OCI-LY7 (cell line): ENCODE measurements at regions of chrX and their contacts with region 1.

Region 1: DNA sequence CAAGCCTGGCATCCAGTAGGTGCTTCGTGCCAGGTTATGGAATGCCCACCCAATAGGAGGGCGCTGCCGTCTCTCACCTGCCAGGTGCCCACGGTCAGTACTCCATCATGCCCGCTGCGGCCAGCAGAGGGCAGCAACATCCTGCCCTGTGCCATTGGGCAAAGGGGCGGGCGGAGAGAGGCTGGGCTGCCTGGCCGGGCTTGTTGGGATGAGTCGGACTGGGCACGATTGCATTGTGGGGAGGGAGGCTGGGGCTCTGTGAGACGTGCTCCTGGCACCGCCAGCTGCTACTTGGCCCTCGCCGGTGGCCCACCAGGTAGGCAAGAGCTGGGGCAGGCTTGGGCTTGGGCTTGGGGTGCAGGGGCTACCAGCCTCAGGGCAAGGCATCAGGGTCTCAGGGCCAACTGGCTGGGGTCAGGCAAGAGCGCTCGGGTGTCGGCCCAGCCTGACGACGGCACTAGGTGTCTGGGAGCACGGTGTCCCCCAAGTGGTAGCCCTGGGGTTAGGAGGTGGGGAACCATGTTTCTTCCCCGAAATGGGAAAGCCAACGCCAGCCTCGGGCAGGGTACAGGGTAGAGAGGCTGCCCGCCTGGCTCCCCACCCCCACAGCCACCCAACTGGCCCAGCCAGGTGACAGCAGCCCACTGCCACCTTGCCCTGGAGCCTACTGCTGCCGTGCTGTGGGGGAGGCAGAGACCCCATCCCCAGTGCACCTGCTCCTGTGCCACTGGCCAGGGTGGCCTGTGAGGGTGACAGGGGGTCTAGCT is at the start of gene PLXNB3:
- DNase-seq: peak; percentile 64
- H3K4me3 ChIP-seq: no peak within 1 kb of the TSS
- H3K27ac ChIP-seq: no peak within 1 kb of the TSS
- H3K4me1 ChIP-seq: peaks cover 6% of the 10 kb centered on the region
- CTCF ChIP-seq: peak; percentile 78
- total RNA-seq, gene PLXNB3: not detected in 2 replicates

Region 2: GRCh38 chrX:153667956-153668396 is 96.2 kb before region 1 on chrX:
- CTCF ChIA-PET with region 1: no interaction called
- POLR2A ChIA-PET with region 1: no interaction called
- intact Hi-C with region 1: no loop called
- DNase-seq: peak; percentile 56
- H3K4me3 ChIP-seq: no peak overlapping the region
- H3K27ac ChIP-seq: no peak overlapping the region
- H3K4me1 ChIP-seq: no peaks in the 10 kb centered on the region
- CTCF ChIP-seq: peak; percentile 82

Region 3: GRCh38 chrX:153687121-153688039 is 76.8 kb before region 1 on chrX and contains the start of gene SLC6A8:
- CTCF ChIA-PET with region 1: no interaction called
- POLR2A ChIA-PET with region 1: no interaction called
- intact Hi-C with region 1: loop called (anchors 10 kb)
- DNase-seq: peak; percentile 31
- H3K4me3 ChIP-seq: peak within 1 kb of the TSS; percentile 47
- H3K27ac ChIP-seq: no peak within 1 kb of the TSS
- H3K4me1 ChIP-seq: no peaks in the 10 kb centered on the region
- CTCF ChIP-seq: peak; percentile 63
- total RNA-seq, gene SLC6A8: not detected in 2 replicates

Region 4: DNA sequence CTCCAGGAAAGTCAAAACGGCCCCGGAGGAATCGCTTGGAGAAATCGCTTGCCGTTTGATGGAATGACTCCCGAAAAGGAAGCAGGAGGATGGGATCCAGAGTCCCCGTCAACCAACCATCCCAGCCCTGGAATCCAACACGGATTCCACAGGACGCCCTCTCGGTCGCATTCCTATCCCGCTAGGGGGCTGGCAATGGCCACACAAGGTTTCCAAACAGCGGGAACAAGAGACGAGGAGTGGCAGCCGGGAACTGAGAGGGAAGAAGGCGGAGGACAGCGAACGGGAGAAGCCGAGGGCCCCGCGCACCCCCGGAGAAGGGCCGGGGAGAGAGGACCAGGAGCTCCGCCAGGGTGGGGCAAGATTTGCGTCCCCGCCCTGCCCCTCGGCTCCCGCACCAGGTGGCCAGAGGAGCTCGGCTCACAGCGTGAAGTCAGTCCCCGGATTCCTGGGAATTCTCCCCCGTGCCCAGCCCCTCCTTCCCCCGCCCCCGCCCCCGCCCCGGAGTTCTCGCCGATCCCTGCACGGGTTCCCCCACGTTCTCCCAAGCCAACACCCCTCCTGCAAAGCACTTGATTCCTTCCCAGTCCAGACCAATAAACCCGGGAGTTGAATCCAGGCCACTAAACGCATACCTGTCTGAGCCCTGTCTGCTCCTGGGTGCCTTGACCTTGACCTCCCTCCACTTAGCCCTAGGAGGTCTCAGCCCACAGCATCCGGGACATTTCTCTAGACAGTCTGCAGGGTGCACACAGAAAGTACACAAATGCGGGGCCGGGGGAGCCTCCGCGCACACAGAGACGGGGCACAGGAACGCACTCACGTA is 64.8 kb after region 1 on chrX:
- CTCF ChIA-PET with region 1: no interaction called
- POLR2A ChIA-PET with region 1: no interaction called
- intact Hi-C with region 1: loop called (anchors 10 kb)
- DNase-seq: no peak
- H3K4me3 ChIP-seq: no peak overlapping the region
- H3K27ac ChIP-seq: no peak overlapping the region
- H3K4me1 ChIP-seq: no peaks in the 10 kb centered on the region
- CTCF ChIP-seq: no peak

Region 5: GRCh38 chrX:153885968-153886903 is 122.1 kb after region 1 on chrX and contains the start of gene L1CAM:
- CTCF ChIA-PET with region 1: no interaction called
- POLR2A ChIA-PET with region 1: no interaction called
- intact Hi-C with region 1: loop called (anchors 5 kb)
- DNase-seq: no peak
- H3K4me3 ChIP-seq: no peak within 1 kb of the TSS
- H3K27ac ChIP-seq: no peak within 1 kb of the TSS
- H3K4me1 ChIP-seq: no peaks in the 10 kb centered on the region
- CTCF ChIP-seq: no peak
- total RNA-seq, gene L1CAM: not detected in 2 replicates

Region 6: GRCh38 chrX:153947009-153947769 is 183.0 kb after region 1 on chrX:
- CTCF ChIA-PET with region 1: no interaction called
- POLR2A ChIA-PET with region 1: no interaction called
- intact Hi-C with region 1: loop called (anchors 1 kb)
- DNase-seq: peak; percentile 86
- H3K4me3 ChIP-seq: no peak overlapping the region
- H3K27ac ChIP-seq: no peak overlapping the region
- H3K4me1 ChIP-seq: peaks cover 16% of the 10 kb centered on the region
- CTCF ChIP-seq: peak; percentile 88